CD4-positive, alpha-beta memory T cell (primary cell): ENCODE measurements at regions of chr17 and their contacts with region 1.

Region 1: GRCh38 chr17:68463211-68464019 is 6.1 kb upstream of the WIPI1 start:
- DNase-seq: no peak
- H3K4me3 ChIP-seq: no peak overlapping the region
- H3K4me3 Mint-ChIP-seq: peak overlapping the region in 1 of 8 donors; percentile 59
- H3K27ac ChIP-seq: no peak overlapping the region
- H3K27ac Mint-ChIP-seq: peak overlapping the region in 5 of 7 donors; percentile 18 to 90 (median 66)
- H3K4me1 ChIP-seq: peaks cover 41% of the 10 kb centered on the region
- H3K4me1 Mint-ChIP-seq: peaks cover 34 to 47% (median 39%) of the 10 kb centered on the region in 4 donors
- H3K27me3 ChIP-seq: no peaks in the 10 kb centered on the region
- H3K27me3 Mint-ChIP-seq: no peaks in the 10 kb centered on the region

Region 2: GRCh38 chr17:67959288-67959900 is 504.0 kb before region 1 on chr17:
- CTCF ChIA-PET with region 1: interaction called, 15 read pairs
- POLR2A ChIA-PET with region 1: no interaction called
- intact Hi-C with region 1: loop called (anchors 1 kb)
- DNase-seq: no peak
- H3K4me3 ChIP-seq: no peak overlapping the region
- H3K4me3 Mint-ChIP-seq: no peak overlapping the region
- H3K27ac ChIP-seq: no peak overlapping the region
- H3K27ac Mint-ChIP-seq: peak overlapping the region in 6 of 7 donors; percentile 1 to 90 (median 72)
- H3K4me1 ChIP-seq: no peaks in the 10 kb centered on the region
- H3K4me1 Mint-ChIP-seq: peaks cover 0 to 6% (median 3%) of the 10 kb centered on the region in 4 donors
- H3K27me3 ChIP-seq: no peaks in the 10 kb centered on the region
- H3K27me3 Mint-ChIP-seq: no peaks in the 10 kb centered on the region

Region 3: GRCh38 chr17:68319410-68320162 is 143.8 kb before region 1 on chr17:
- CTCF ChIA-PET with region 1: no interaction called
- POLR2A ChIA-PET with region 1: no interaction called
- intact Hi-C with region 1: no loop called
- DNase-seq: no peak
- H3K4me3 ChIP-seq: no peak overlapping the region
- H3K4me3 Mint-ChIP-seq: no peak overlapping the region
- H3K27ac ChIP-seq: no peak overlapping the region
- H3K27ac Mint-ChIP-seq: no peak overlapping the region
- H3K4me1 ChIP-seq: peaks cover 48% of the 10 kb centered on the region
- H3K4me1 Mint-ChIP-seq: peaks cover 28 to 65% (median 47%) of the 10 kb centered on the region in 4 donors
- H3K27me3 ChIP-seq: no peaks in the 10 kb centered on the region
- H3K27me3 Mint-ChIP-seq: no peaks in the 10 kb centered on the region

Region 4: GRCh38 chr17:68480885-68481284 is 17.5 kb after region 1 on chr17:
- CTCF ChIA-PET with region 1: interaction called, 10 read pairs
- POLR2A ChIA-PET with region 1: no interaction called
- intact Hi-C with region 1: no loop called
- DNase-seq: no peak
- H3K4me3 ChIP-seq: no peak overlapping the region
- H3K4me3 Mint-ChIP-seq: no peak overlapping the region
- H3K27ac ChIP-seq: no peak overlapping the region
- H3K27ac Mint-ChIP-seq: no peak overlapping the region
- H3K4me1 ChIP-seq: no peaks in the 10 kb centered on the region
- H3K4me1 Mint-ChIP-seq: no peaks in the 10 kb centered on the region
- H3K27me3 ChIP-seq: no peaks in the 10 kb centered on the region
- H3K27me3 Mint-ChIP-seq: peaks cover 5 to 10% of the 10 kb centered on the region in 2 donors

Region 5: GRCh38 chr17:69218986-69219385 is 755.6 kb after region 1 on chr17:
- CTCF ChIA-PET with region 1: no interaction called
- POLR2A ChIA-PET with region 1: no interaction called
- intact Hi-C with region 1: no loop called
- DNase-seq: no peak
- H3K4me3 ChIP-seq: no peak overlapping the region
- H3K4me3 Mint-ChIP-seq: no peak overlapping the region
- H3K27ac ChIP-seq: no peak overlapping the region
- H3K27ac Mint-ChIP-seq: no peak overlapping the region
- H3K4me1 ChIP-seq: no peaks in the 10 kb centered on the region
- H3K4me1 Mint-ChIP-seq: peaks cover 0 to 10% (median 2%) of the 10 kb centered on the region in 4 donors
- H3K27me3 ChIP-seq: no peaks in the 10 kb centered on the region
- H3K27me3 Mint-ChIP-seq: no peaks in the 10 kb centered on the region